Naive thymus-derived CD4-positive, alpha-beta T cell (primary cell): ENCODE measurements at regions of chr12 and their contacts with region 1.

Region 1: GRCh38 chr12:15522565-15523187 is 200.4 kb downstream of the PTPRO start:
- DNase-seq: peak in 1 of 9 donors; percentile 11
- ATAC-seq: no peak
- H3K4me3 ChIP-seq: no peak overlapping the region
- H3K4me3 Mint-ChIP-seq: no peak overlapping the region
- H3K27ac ChIP-seq: no peak overlapping the region
- H3K27ac Mint-ChIP-seq: no peak overlapping the region
- H3K4me1 ChIP-seq: no peaks in the 10 kb centered on the region
- H3K4me1 Mint-ChIP-seq: peaks cover 0 to 11% (median 8%) of the 10 kb centered on the region in 7 donors
- H3K27me3 ChIP-seq: no peaks in the 10 kb centered on the region
- H3K27me3 Mint-ChIP-seq: peaks cover 9 to 52% (median 32%) of the 10 kb centered on the region in 5 donors

Region 2: DNA sequence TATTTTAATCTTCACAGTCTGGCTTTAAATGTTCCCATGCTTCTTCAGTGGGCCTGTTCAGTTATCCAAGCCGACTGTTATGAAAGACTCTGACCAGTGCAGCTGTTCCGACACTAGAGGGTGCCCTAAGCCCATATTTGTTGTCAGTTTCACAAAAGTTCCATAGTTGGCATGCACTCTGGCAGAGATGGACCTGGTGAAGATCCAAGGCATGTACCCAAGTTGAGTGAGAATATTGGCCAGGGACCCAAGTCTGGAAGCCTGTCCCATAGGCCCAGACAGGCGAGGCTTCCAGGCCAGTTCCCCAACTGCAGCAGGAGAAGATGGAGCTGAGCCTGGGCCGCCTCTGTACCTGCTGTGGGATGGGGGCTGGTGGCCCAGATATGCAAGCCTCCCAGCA is 798.9 kb before region 1 on chr12:
- CTCF ChIA-PET with region 1: no interaction called
- POLR2A ChIA-PET with region 1: no interaction called
- intact Hi-C with region 1: loop called in 1 of 2 experiments (anchors 5 kb)
- DNase-seq: peak; percentile 19 to 67 (median 59)
- ATAC-seq: peak; percentile 83
- H3K4me3 ChIP-seq: no peak overlapping the region
- H3K4me3 Mint-ChIP-seq: no peak overlapping the region
- H3K27ac ChIP-seq: no peak overlapping the region
- H3K27ac Mint-ChIP-seq: no peak overlapping the region
- H3K4me1 ChIP-seq: no peaks in the 10 kb centered on the region
- H3K4me1 Mint-ChIP-seq: peaks cover 0 to 4% (median 0%) of the 10 kb centered on the region in 7 donors
- H3K27me3 ChIP-seq: no peaks in the 10 kb centered on the region
- H3K27me3 Mint-ChIP-seq: peaks cover 0 to 34% (median 10%) of the 10 kb centered on the region in 5 donors

Region 3: GRCh38 chr12:15227004-15227679 is 295.5 kb before region 1 on chr12:
- CTCF ChIA-PET with region 1: no interaction called
- POLR2A ChIA-PET with region 1: no interaction called
- intact Hi-C with region 1: loop called (anchors 1 to 2 kb)
- DNase-seq: peak in 4 of 9 donors; percentile 10 to 25 (median 20)
- ATAC-seq: peak; percentile 53
- H3K4me3 ChIP-seq: no peak overlapping the region
- H3K4me3 Mint-ChIP-seq: no peak overlapping the region
- H3K27ac ChIP-seq: no peak overlapping the region
- H3K27ac Mint-ChIP-seq: no peak overlapping the region
- H3K4me1 ChIP-seq: no peaks in the 10 kb centered on the region
- H3K4me1 Mint-ChIP-seq: peaks cover 0 to 5% (median 0%) of the 10 kb centered on the region in 7 donors
- H3K27me3 ChIP-seq: no peaks in the 10 kb centered on the region
- H3K27me3 Mint-ChIP-seq: peaks cover 46 to 58% (median 50%) of the 10 kb centered on the region in 5 donors

Region 4: GRCh38 chr12:15268927-15269552 is 253.6 kb before region 1 on chr12:
- CTCF ChIA-PET with region 1: no interaction called
- POLR2A ChIA-PET with region 1: no interaction called
- intact Hi-C with region 1: loop called in 1 of 2 experiments (anchors 2 kb)
- DNase-seq: peak in 7 of 9 donors; percentile 28 to 65 (median 56)
- ATAC-seq: peak; percentile 79
- H3K4me3 ChIP-seq: no peak overlapping the region
- H3K4me3 Mint-ChIP-seq: no peak overlapping the region
- H3K27ac ChIP-seq: no peak overlapping the region
- H3K27ac Mint-ChIP-seq: no peak overlapping the region
- H3K4me1 ChIP-seq: no peaks in the 10 kb centered on the region
- H3K4me1 Mint-ChIP-seq: no peaks in the 10 kb centered on the region
- H3K27me3 ChIP-seq: no peaks in the 10 kb centered on the region
- H3K27me3 Mint-ChIP-seq: peaks cover 2 to 11% (median 5%) of the 10 kb centered on the region in 5 donors

Region 5: GRCh38 chr12:15276088-15276698 is 246.5 kb before region 1 on chr12:
- CTCF ChIA-PET with region 1: interaction called, 4 read pairs
- POLR2A ChIA-PET with region 1: no interaction called
- intact Hi-C with region 1: loop called (anchors 1 kb)
- DNase-seq: peak in 2 of 9 donors; percentile 5 to 13
- ATAC-seq: no peak
- H3K4me3 ChIP-seq: no peak overlapping the region
- H3K4me3 Mint-ChIP-seq: no peak overlapping the region
- H3K27ac ChIP-seq: no peak overlapping the region
- H3K27ac Mint-ChIP-seq: no peak overlapping the region
- H3K4me1 ChIP-seq: no peaks in the 10 kb centered on the region
- H3K4me1 Mint-ChIP-seq: peaks cover 0 to 10% (median 0%) of the 10 kb centered on the region in 7 donors
- H3K27me3 ChIP-seq: no peaks in the 10 kb centered on the region
- H3K27me3 Mint-ChIP-seq: peaks cover 0 to 18% (median 15%) of the 10 kb centered on the region in 5 donors